ENCODE measurements at regions of chr3 and their contacts with region 1.

Region 1: GRCh38 chr3:173745952-173746682 is 348.6 kb downstream of the NLGN1 start:
- DNase-seq: peak; percentile 93
- H3K4me3 ChIP-seq: no peak overlapping the region
- H3K27ac ChIP-seq: peak overlapping the region; percentile 96
- H3K4me1 ChIP-seq: peaks cover 97% of the 10 kb centered on the region
- H3K27me3 ChIP-seq: no peaks in the 10 kb centered on the region
- CTCF ChIP-seq: no peak
- POLR2A ChIP-seq: no peak

Region 2: DNA sequence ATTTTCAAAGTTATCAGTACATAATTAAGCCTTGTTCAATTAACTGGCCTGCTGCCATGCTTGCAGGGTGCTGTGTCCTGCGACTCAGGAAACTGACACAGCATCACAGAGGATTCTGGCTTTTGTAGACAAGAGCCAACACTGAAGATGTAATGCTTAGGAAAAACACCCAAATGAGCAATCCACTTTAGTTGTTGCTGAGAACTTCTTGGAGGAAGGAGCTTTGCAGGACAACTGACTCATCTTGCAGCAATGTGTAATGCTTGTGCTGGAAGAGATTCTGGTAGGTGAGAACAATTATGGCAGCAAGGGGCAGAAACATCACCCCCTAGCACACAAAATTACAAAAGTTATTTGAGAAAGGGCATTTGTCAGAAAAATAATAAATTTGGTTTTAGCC is 281.0 kb before region 1 on chr3:
- CTCF ChIA-PET with region 1: no interaction called
- POLR2A ChIA-PET with region 1: no interaction called
- dilution Hi-C with region 1: no loop called
- intact Hi-C with region 1: loop called (anchors 1 kb)
- DNase-seq: peak; percentile 79
- H3K4me3 ChIP-seq: peak overlapping the region in 1 of 3 experiments; percentile 32
- H3K27ac ChIP-seq: peak overlapping the region; percentile 56
- H3K4me1 ChIP-seq: peaks cover 27% of the 10 kb centered on the region
- H3K27me3 ChIP-seq: no peaks in the 10 kb centered on the region
- CTCF ChIP-seq: no peak
- POLR2A ChIP-seq: no peak

Region 3: DNA sequence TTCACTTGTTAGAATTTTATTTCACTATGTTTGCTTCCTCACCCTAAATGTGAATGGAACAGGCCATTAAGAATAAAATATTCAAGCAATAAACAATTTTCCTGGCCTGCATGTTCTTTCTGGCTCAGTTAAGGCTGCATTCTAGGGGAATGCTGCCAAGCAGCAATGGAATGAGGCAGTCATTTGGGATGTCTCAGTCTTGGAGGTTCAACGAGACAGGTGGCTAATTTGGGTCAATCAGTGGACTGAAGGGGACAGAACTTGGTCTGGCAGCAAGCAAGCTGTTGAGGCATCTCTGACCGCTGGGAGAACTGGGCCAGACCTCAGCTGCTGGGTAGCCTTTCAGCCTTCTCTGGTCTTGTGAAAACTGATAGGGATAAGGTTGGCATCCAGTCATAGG is 107.0 kb before region 1 on chr3:
- CTCF ChIA-PET with region 1: no interaction called
- POLR2A ChIA-PET with region 1: no interaction called
- dilution Hi-C with region 1: no loop called
- intact Hi-C with region 1: no loop called
- DNase-seq: no peak
- H3K4me3 ChIP-seq: no peak overlapping the region
- H3K27ac ChIP-seq: no peak overlapping the region
- H3K4me1 ChIP-seq: no peaks in the 10 kb centered on the region
- H3K27me3 ChIP-seq: no peaks in the 10 kb centered on the region
- CTCF ChIP-seq: no peak
- POLR2A ChIP-seq: no peak

Region 4: GRCh38 chr3:173733029-173733652 is 13.0 kb before region 1 on chr3:
- CTCF ChIA-PET with region 1: interaction called, 20 read pairs
- POLR2A ChIA-PET with region 1: no interaction called
- dilution Hi-C with region 1: no loop called
- intact Hi-C with region 1: no loop called
- DNase-seq: peak; percentile 72
- H3K4me3 ChIP-seq: no peak overlapping the region
- H3K27ac ChIP-seq: no peak overlapping the region
- H3K4me1 ChIP-seq: peaks cover 20% of the 10 kb centered on the region
- H3K27me3 ChIP-seq: no peaks in the 10 kb centered on the region
- CTCF ChIP-seq: peak; percentile 23 to 44
- POLR2A ChIP-seq: no peak

Region 5: GRCh38 chr3:173891272-173892100 is 145.4 kb after region 1 on chr3:
- CTCF ChIA-PET with region 1: no interaction called
- POLR2A ChIA-PET with region 1: no interaction called
- dilution Hi-C with region 1: no loop called
- intact Hi-C with region 1: loop called (anchors 2 kb)
- DNase-seq: peak; percentile 17
- H3K4me3 ChIP-seq: no peak overlapping the region
- H3K27ac ChIP-seq: no peak overlapping the region
- H3K4me1 ChIP-seq: peaks cover 21% of the 10 kb centered on the region
- H3K27me3 ChIP-seq: no peaks in the 10 kb centered on the region
- CTCF ChIP-seq: no peak
- POLR2A ChIP-seq: no peak

Region 6: DNA sequence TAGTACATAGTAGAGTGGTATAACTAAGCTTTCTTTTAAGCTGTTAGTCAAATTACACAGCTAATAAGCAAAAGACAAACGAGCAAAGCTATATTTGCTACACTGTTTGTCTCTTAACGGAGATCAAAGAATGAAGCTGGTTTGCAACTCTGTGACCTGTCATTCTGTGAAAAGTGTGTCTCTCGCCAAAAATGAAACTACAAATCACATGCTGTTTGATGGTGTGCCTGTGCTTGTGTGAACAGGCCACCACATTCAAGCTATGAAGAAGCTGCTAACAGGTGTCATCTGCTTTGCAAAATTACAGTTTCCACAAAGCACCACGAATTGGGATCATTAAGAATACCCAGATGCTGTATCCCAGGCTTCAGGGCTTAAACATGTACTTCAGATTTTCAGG is 445.3 kb after region 1 on chr3:
- CTCF ChIA-PET with region 1: no interaction called
- POLR2A ChIA-PET with region 1: no interaction called
- dilution Hi-C with region 1: no loop called
- intact Hi-C with region 1: loop called (anchors 10 kb)
- DNase-seq: peak; percentile 28
- H3K4me3 ChIP-seq: no peak overlapping the region
- H3K27ac ChIP-seq: no peak overlapping the region
- H3K4me1 ChIP-seq: peaks cover 21% of the 10 kb centered on the region
- H3K27me3 ChIP-seq: no peaks in the 10 kb centered on the region
- CTCF ChIP-seq: no peak
- POLR2A ChIP-seq: no peak

Measured in endothelial cell of umbilical vein (primary cell).